Calu3 (cell line): ENCODE measurements at regions of chr3 and their contacts with region 1.

Region 1: DNA sequence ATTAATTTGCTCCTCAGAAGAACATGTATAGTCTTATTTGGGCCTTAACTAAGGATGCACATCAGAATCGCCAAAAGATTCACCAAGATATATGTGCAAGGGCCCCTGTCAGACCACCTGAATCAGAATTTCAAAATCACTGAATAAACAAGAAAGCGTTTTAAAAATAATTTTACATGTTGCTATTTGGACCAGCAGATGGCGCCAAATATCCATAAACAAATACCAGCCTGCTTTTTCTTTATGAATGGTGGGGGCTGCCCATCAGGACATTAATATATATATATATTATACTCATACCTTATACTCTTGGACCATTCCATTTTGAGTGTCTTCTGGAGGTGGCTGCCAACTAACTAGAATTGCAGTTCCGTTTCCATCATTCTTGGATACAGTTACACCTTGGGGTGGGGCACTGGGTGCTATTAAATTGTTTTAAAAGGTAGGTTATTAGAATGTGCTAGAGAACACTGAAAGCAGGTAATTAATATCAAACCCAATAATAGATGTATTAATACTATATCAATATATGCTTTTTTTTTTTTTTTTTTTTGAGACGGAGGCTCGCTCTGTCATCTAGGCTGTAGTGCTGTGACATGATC is 1108.3 kb downstream of the ROBO1 start:
- DNase-seq: peak; percentile 13
- H3K4me3 Mint-ChIP-seq: no peak overlapping the region
- H3K27ac Mint-ChIP-seq: no peak overlapping the region
- H3K4me1 Mint-ChIP-seq: no peaks in the 10 kb centered on the region
- H3K27me3 Mint-ChIP-seq: no peaks in the 10 kb centered on the region
- CTCF ChIP-seq: peak; percentile 49

Region 2: GRCh38 chr3:78809966-78810365 is 150.5 kb after region 1 on chr3:
- CTCF ChIA-PET with region 1: no interaction called
- intact Hi-C with region 1: no loop called
- DNase-seq: no peak
- H3K4me3 Mint-ChIP-seq: no peak overlapping the region
- H3K27ac Mint-ChIP-seq: no peak overlapping the region
- H3K4me1 Mint-ChIP-seq: peaks cover 13% of the 10 kb centered on the region
- H3K27me3 Mint-ChIP-seq: no peaks in the 10 kb centered on the region
- CTCF ChIP-seq: no peak

Region 3: GRCh38 chr3:78978037-78978436 is 318.6 kb after region 1 on chr3:
- CTCF ChIA-PET with region 1: no interaction called
- intact Hi-C with region 1: loop called (anchors 1 kb)
- DNase-seq: no peak
- H3K4me3 Mint-ChIP-seq: no peak overlapping the region
- H3K27ac Mint-ChIP-seq: no peak overlapping the region
- H3K4me1 Mint-ChIP-seq: peaks cover 9% of the 10 kb centered on the region
- H3K27me3 Mint-ChIP-seq: no peaks in the 10 kb centered on the region
- CTCF ChIP-seq: peak; percentile 11

Region 4: DNA sequence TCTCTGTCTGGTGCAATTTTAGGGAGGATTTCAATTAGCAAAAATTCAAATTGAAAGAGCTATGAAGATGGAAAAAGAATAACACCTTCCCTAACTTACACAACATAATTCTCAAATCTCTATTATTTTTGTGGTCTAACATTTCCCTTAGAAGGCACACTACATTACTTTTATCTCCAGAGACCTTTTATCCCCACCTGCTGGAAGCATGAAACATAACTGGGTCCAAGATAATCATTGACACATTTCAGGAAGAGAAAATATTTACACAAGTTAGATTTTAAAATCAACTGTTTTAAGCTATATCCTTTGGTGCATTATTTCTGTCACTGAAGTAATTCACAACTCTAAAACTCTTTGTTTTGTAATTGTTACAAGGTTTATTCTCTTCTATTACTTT is 328.8 kb after region 1 on chr3:
- CTCF ChIA-PET with region 1: interaction called, 5 read pairs
- intact Hi-C with region 1: loop called (anchors 1 kb)
- DNase-seq: no peak
- H3K4me3 Mint-ChIP-seq: no peak overlapping the region
- H3K27ac Mint-ChIP-seq: no peak overlapping the region
- H3K4me1 Mint-ChIP-seq: peaks cover 14% of the 10 kb centered on the region
- H3K27me3 Mint-ChIP-seq: no peaks in the 10 kb centered on the region
- CTCF ChIP-seq: no peak

Region 5: GRCh38 chr3:79032686-79033318 is 373.3 kb after region 1 on chr3:
- CTCF ChIA-PET with region 1: no interaction called
- intact Hi-C with region 1: loop called (anchors 1 kb)
- DNase-seq: peak; percentile 31
- H3K4me3 Mint-ChIP-seq: no peak overlapping the region
- H3K27ac Mint-ChIP-seq: no peak overlapping the region
- H3K4me1 Mint-ChIP-seq: no peaks in the 10 kb centered on the region
- H3K27me3 Mint-ChIP-seq: no peaks in the 10 kb centered on the region
- CTCF ChIP-seq: peak; percentile 51

Region 6: DNA sequence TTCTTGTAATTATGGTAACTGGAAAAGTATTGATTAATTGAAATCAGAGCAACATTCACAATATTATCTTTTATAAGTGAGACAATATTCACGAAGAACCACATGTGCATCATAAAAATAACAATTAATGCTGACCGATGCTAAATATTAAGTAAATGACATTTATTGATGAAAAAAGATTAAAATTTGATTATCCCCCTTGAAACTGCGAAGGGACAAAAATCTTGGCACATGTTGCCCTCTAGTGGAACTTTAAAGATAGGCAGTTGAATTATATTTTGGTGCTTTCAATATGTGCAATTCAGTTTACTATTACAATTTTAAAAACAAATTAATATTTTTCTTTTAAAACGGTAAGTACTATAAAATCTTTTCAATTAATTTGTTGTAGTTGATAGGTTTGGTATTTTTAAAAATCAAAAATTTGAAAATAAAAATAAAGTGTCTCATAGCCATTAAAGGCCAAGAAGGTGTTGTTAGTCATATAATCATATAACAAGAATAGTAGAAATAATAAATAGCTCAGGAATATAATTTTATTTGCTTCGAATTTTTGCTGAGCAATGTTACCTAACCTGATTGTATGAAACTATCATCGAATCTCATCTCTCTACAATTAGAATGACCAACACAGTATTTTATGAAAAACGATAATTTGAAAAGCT is 838.1 kb after region 1 on chr3:
- CTCF ChIA-PET with region 1: no interaction called
- intact Hi-C with region 1: loop called (anchors 5 kb)
- DNase-seq: no peak
- H3K4me3 Mint-ChIP-seq: no peak overlapping the region
- H3K27ac Mint-ChIP-seq: no peak overlapping the region
- H3K4me1 Mint-ChIP-seq: no peaks in the 10 kb centered on the region
- H3K27me3 Mint-ChIP-seq: no peaks in the 10 kb centered on the region
- CTCF ChIP-seq: peak; percentile 23